ENCODE measurements at regions of chr7 and their contacts with region 1.

Region 1: DNA sequence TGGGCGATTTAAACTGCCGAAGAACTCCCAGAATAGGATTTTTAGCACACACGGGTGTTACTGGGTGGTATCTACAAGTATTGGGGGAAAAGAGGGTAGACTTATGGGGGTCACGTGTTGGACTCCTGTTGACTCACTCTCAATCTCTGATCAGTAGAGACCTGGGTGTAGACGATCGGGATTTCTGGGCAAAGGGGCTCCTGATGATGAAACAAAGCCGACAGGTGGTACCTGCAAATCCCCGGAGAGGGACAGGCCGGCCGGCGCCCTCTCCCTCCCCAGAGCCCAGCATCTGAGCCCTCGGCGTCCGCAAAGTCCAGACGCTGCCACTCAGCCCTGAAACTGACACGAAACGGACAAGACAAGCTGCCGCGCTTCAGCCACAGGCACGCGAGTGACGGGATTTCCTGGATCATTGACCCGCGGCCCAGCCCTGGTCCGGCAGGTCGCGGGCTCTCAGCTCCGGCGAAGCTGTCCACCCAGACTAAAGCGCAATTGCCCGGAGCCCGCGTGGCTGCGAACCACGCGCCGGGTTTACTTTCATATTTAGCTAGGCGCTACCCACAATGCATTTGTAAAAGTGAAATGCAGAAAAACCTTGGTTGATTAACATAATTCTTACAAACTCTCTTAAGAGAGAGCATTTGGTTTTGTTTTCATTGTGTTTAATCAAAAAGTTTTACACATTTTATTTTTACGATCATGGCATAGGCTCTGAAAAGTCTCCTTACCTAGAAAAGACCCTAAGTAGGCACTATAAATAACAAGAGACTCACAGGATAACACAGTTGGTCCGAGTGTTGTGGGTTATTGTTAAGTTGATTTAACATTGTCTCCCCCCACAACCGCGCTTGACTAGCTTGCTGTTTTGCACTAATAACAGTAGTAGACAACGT is 56.9 kb upstream of the EZH2 start:
- DNase-seq: peak; percentile 82
- ATAC-seq: peak; percentile 77
- H3K4me3 ChIP-seq: peak overlapping the region; percentile 58 to 67
- H3K27ac ChIP-seq: peak overlapping the region; percentile 69
- H3K4me1 ChIP-seq: peaks cover 10 to 15% of the 10 kb centered on the region in 2 experiments; a peak in 3 of 4 replicates
- H3K27me3 ChIP-seq: no peaks in the 10 kb centered on the region
- CTCF ChIP-seq: no peak
- POLR2A ChIP-seq: peak; percentile 89
- RAD21 ChIP-seq: peak; percentile 2; the same call in 1 of the 2 replicates

Region 2: GRCh38 chr7:148241700-148242293 is 699.2 kb before region 1 on chr7:
- CTCF ChIA-PET with region 1: no interaction called
- POLR2A ChIA-PET with region 1: no interaction called
- RAD21 ChIA-PET with region 1: no interaction called
- intact Hi-C with region 1: no loop called
- DNase-seq: no peak
- ATAC-seq: no peak
- H3K4me3 ChIP-seq: no peak overlapping the region
- H3K27ac ChIP-seq: no peak overlapping the region
- H3K4me1 ChIP-seq: peaks cover 0 to 3% of the 10 kb centered on the region in 2 experiments; a peak in 1 of 4 replicates
- H3K27me3 ChIP-seq: no peaks in the 10 kb centered on the region
- CTCF ChIP-seq: no peak
- POLR2A ChIP-seq: no peak
- RAD21 ChIP-seq: no peak

Region 3: GRCh38 chr7:148856891-148857290 is 84.1 kb before region 1 on chr7:
- CTCF ChIA-PET with region 1: interaction called, 11 read pairs
- POLR2A ChIA-PET with region 1: interaction called, 3 read pairs
- RAD21 ChIA-PET with region 1: no interaction called
- intact Hi-C with region 1: no loop called
- DNase-seq: no peak
- ATAC-seq: no peak
- H3K4me3 ChIP-seq: no peak overlapping the region
- H3K27ac ChIP-seq: no peak overlapping the region
- H3K4me1 ChIP-seq: 0 out of 4 replicates have a peak, but pooled peaks cover 0 to 5% of the 10 kb centered on the region in 2 experiments
- H3K27me3 ChIP-seq: no peaks in the 10 kb centered on the region
- CTCF ChIP-seq: no peak
- POLR2A ChIP-seq: no peak
- RAD21 ChIP-seq: no peak

Region 4: DNA sequence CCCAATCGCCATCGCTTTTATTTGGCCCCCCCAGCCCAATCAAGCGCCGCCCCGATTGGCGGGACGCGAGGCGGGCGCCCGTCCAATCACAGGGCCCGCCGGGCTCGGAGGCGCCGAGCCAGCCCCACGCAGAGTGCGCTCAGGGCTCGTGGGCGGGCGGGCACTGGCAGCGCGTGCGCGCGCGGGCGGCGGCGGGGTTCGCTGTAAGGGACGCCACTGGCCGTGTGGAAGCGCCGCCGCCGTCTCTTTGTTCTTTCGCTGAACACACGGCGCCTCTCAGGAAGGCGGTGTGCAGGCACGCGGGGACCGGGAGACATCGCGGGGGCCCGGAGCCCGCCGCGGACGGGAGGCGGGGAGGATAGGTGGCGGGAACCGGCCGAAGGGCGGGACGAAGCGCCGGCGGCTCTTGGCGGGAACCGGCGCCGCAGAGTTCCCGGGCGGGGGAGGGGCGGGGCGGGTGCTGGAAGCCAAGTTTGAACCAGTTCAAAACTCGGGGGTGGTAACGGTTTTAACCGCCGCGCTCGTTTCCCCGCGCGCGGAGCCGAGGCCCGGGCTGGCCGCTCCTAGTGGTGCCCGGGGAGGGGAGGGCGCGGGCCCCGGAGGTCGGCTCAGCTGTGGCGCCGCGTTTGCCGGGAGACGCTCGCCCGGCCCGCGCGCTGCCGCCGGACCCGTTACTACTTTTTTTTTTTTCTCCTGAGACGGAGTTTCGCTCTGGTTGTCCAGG is 56.5 kb before region 1 on chr7:
- CTCF ChIA-PET with region 1: no interaction called
- POLR2A ChIA-PET with region 1: interaction called, 9 read pairs
- RAD21 ChIA-PET with region 1: interaction called in 1 of 2 experiments, 3 read pairs
- intact Hi-C with region 1: loop called (anchors 1 kb)
- DNase-seq: peak; percentile 74
- ATAC-seq: peak; percentile 91
- H3K4me3 ChIP-seq: peak overlapping the region; percentile 69 to 78
- H3K27ac ChIP-seq: peak overlapping the region; percentile 94
- H3K4me1 ChIP-seq: peaks cover 8 to 19% of the 10 kb centered on the region in 2 experiments; a peak in 3 of 4 replicates
- H3K27me3 ChIP-seq: no peaks in the 10 kb centered on the region
- CTCF ChIP-seq: no peak
- POLR2A ChIP-seq: no peak
- RAD21 ChIP-seq: no peak

Measured in HCT116 (cell line).